Activated CD8-positive, alpha-beta memory T cell treated with anti-CD3 and anti-CD28 coated beads, Interleukin-2, amount 10 ng/mL, durations not matched to agents 7 days and 5 days (primary cell): ENCODE measurements at regions of chr20 and their contacts with region 1.

Region 1: GRCh38 chr20:45011108-45011526 is 44.8 kb downstream of the STK4 start:
- DNase-seq: peak; percentile 61
- ATAC-seq: peak; percentile 72
- H3K4me3 Mint-ChIP-seq: no peak overlapping the region
- H3K27ac Mint-ChIP-seq: peak overlapping the region; percentile 25
- H3K4me1 Mint-ChIP-seq: peaks cover 31% of the 10 kb centered on the region
- H3K27me3 Mint-ChIP-seq: no peaks in the 10 kb centered on the region

Region 2: DNA sequence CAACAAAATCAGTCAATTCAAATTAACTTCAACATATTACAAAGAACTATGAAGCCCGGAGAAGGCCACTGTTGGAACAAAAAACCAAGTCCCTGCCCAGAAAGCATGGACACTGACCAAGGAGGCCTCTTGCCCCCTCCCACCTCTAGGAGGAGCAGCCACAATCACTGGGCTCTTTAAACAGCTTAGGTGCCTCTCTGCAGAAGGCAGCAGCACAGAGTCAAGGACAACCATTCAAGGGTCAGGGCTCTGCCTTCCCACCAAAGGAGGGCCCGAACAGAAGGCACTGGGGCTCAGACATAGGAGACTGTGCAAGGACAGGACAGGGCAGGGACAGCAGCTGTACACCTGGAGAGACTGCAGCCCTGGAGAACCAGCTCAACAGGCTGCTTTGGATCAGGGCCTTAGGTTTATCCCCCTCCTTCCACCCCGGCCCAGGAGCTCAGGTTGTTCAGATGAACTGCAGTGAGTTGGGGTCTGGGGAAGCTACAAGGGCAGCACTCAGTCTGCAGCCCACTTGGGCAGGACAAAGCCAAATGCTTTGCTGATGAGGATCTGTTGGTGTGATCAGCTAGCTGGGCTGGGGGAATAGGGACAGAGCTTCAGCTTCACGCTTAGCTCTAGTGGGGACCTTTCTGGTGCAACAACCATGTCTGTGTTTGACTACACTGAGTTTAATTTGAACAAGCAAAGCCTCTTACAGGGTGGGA is 68.7 kb before region 1 on chr20:
- CTCF ChIA-PET with region 1: no interaction called
- DNase-seq: no peak
- ATAC-seq: no peak
- H3K4me3 Mint-ChIP-seq: no peak overlapping the region
- H3K27ac Mint-ChIP-seq: peak overlapping the region; percentile 34
- H3K4me1 Mint-ChIP-seq: peaks cover 3% of the 10 kb centered on the region
- H3K27me3 Mint-ChIP-seq: no peaks in the 10 kb centered on the region

Region 3: GRCh38 chr20:45111799-45112471 is 100.8 kb after region 1 on chr20:
- CTCF ChIA-PET with region 1: interaction called, 12 read pairs
- DNase-seq: no peak
- ATAC-seq: no peak
- H3K4me3 Mint-ChIP-seq: no peak overlapping the region
- H3K27ac Mint-ChIP-seq: no peak overlapping the region
- H3K4me1 Mint-ChIP-seq: peaks cover 3% of the 10 kb centered on the region
- H3K27me3 Mint-ChIP-seq: peaks cover 3% of the 10 kb centered on the region